ENCODE measurements at regions of chr5 and their contacts with region 1.

Region 1: GRCh38 chr5:66757188-66757833 is 161.1 kb downstream of the MAST4 start:
- DNase-seq: peak in 4 of 9 donors; percentile 5 to 37 (median 22)
- ATAC-seq: peak; percentile 54
- H3K4me3 ChIP-seq: no peak overlapping the region
- H3K4me3 Mint-ChIP-seq: no peak overlapping the region
- H3K27ac ChIP-seq: no peak overlapping the region
- H3K27ac Mint-ChIP-seq: no peak overlapping the region
- H3K4me1 ChIP-seq: no peaks in the 10 kb centered on the region
- H3K4me1 Mint-ChIP-seq: no peaks in the 10 kb centered on the region
- H3K27me3 ChIP-seq: no peaks in the 10 kb centered on the region
- H3K27me3 Mint-ChIP-seq: peaks cover 9 to 46% (median 15%) of the 10 kb centered on the region in 5 donors

Region 2: DNA sequence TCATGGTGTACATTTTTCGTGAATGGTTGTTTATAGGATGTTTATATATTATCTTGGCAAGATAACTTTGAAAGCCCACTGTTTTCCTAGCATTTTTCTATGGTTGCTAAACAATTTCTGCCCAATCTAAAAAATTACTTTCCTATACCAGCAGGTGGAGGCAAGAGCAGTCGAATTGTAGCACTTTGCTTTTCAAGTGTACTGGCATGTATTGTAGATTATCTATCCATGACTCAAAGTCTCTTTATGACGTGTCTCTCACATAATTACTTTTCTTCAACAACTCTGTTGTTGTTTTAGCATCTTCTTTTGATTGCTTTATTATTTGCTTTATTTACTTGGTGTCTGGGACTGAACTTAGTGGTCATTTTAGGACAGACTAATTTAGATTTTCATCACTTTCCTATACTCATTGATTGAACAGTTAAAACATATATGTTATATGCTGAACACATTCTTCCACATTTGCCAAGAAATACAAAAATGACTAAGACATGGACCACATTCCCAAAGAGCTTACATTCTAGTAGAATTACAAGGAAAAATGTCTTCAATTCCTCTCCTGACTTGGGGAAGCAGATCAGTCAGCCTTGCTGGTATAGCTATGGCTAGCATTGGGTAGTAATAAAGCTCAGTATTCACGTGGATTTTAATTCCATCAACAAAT is 1014.6 kb before region 1 on chr5:
- CTCF ChIA-PET with region 1: no interaction called
- POLR2A ChIA-PET with region 1: no interaction called
- intact Hi-C with region 1: loop called (anchors 1 to 5 kb)
- DNase-seq: peak in 6 of 9 donors; percentile 13 to 46 (median 27)
- ATAC-seq: peak; percentile 70
- H3K4me3 ChIP-seq: no peak overlapping the region
- H3K4me3 Mint-ChIP-seq: no peak overlapping the region
- H3K27ac ChIP-seq: no peak overlapping the region
- H3K27ac Mint-ChIP-seq: no peak overlapping the region
- H3K4me1 ChIP-seq: no peaks in the 10 kb centered on the region
- H3K4me1 Mint-ChIP-seq: peaks cover 0 to 9% (median 3%) of the 10 kb centered on the region in 7 donors
- H3K27me3 ChIP-seq: no peaks in the 10 kb centered on the region
- H3K27me3 Mint-ChIP-seq: no peaks in the 10 kb centered on the region

Region 3: GRCh38 chr5:66356011-66356565 is 401.2 kb before region 1 on chr5:
- CTCF ChIA-PET with region 1: no interaction called
- POLR2A ChIA-PET with region 1: no interaction called
- intact Hi-C with region 1: no loop called
- DNase-seq: no peak
- ATAC-seq: no peak
- H3K4me3 ChIP-seq: no peak overlapping the region
- H3K4me3 Mint-ChIP-seq: no peak overlapping the region
- H3K27ac ChIP-seq: no peak overlapping the region
- H3K27ac Mint-ChIP-seq: no peak overlapping the region
- H3K4me1 ChIP-seq: no peaks in the 10 kb centered on the region
- H3K4me1 Mint-ChIP-seq: peaks cover 0 to 7% (median 0%) of the 10 kb centered on the region in 7 donors
- H3K27me3 ChIP-seq: no peaks in the 10 kb centered on the region
- H3K27me3 Mint-ChIP-seq: peaks cover 5 to 19% (median 9%) of the 10 kb centered on the region in 5 donors

Region 4: GRCh38 chr5:66595756-66596635 is 161.3 kb before region 1 on chr5 and contains the start of gene MAST4:
- CTCF ChIA-PET with region 1: no interaction called
- POLR2A ChIA-PET with region 1: no interaction called
- intact Hi-C with region 1: no loop called
- DNase-seq: peak in 7 of 9 donors; percentile 1 to 81 (median 23)
- ATAC-seq: peak; percentile 86
- H3K4me3 ChIP-seq: peak within 1 kb of the TSS; percentile 19
- H3K4me3 Mint-ChIP-seq: peak within 1 kb of the TSS; percentile 75 to 91 (median 81)
- H3K27ac ChIP-seq: no peak within 1 kb of the TSS
- H3K27ac Mint-ChIP-seq: peak within 1 kb of the TSS in 1 of 9 donors; percentile 22
- H3K4me1 ChIP-seq: peaks cover 0 to 14% of the 10 kb centered on the region in 2 donors
- H3K4me1 Mint-ChIP-seq: peaks cover 0 to 30% (median 19%) of the 10 kb centered on the region in 7 donors
- H3K27me3 ChIP-seq: peaks cover 3 to 5% of the 10 kb centered on the region in 2 donors
- H3K27me3 Mint-ChIP-seq: peaks cover 42 to 77% (median 62%) of the 10 kb centered on the region in 5 donors
- total RNA-seq, gene MAST4: 25.1 to 39.0 (median 30.9) TPM

Region 5: GRCh38 chr5:67465537-67466207 is 708.4 kb after region 1 on chr5:
- CTCF ChIA-PET with region 1: no interaction called
- POLR2A ChIA-PET with region 1: no interaction called
- intact Hi-C with region 1: no loop called
- DNase-seq: no peak
- ATAC-seq: no peak
- H3K4me3 ChIP-seq: no peak overlapping the region
- H3K4me3 Mint-ChIP-seq: no peak overlapping the region
- H3K27ac ChIP-seq: no peak overlapping the region
- H3K27ac Mint-ChIP-seq: no peak overlapping the region
- H3K4me1 ChIP-seq: no peaks in the 10 kb centered on the region
- H3K4me1 Mint-ChIP-seq: peaks cover 0 to 2% (median 0%) of the 10 kb centered on the region in 7 donors
- H3K27me3 ChIP-seq: no peaks in the 10 kb centered on the region
- H3K27me3 Mint-ChIP-seq: no peaks in the 10 kb centered on the region